ENCODE measurements at regions of chr2 and their contacts with region 1.

Region 1: DNA sequence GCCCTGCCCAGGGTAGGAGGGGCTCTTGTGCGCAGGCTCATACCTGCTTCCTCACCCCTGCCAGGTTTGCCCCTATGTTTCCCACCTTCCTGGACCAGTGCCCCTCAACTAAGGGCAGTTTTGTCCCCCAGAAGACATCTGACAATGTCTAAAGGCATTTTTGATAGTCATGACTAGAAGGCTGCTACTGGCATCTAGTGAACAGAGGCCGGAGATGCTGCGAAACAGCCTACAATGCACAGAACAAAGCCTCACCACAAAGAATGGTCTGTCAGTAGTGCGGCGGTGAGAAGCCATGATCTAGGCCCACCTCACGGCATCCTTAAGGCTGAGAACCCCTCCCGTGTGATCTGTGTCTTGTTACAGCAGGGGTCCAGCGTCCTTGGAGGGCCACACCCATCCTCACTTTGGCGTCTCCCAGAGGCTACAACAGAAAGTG is 96.0 kb downstream of the TMEM17 start:
- DNase-seq: no peak
- ATAC-seq: no peak
- H3K4me3 Mint-ChIP-seq: no peak overlapping the region
- H3K27ac Mint-ChIP-seq: no peak overlapping the region
- H3K4me1 Mint-ChIP-seq: peaks cover 34% of the 10 kb centered on the region
- H3K27me3 Mint-ChIP-seq: peaks cover 2% of the 10 kb centered on the region; the same call in 1 of the 2 replicates
- CTCF ChIP-seq: no peak

Region 2: DNA sequence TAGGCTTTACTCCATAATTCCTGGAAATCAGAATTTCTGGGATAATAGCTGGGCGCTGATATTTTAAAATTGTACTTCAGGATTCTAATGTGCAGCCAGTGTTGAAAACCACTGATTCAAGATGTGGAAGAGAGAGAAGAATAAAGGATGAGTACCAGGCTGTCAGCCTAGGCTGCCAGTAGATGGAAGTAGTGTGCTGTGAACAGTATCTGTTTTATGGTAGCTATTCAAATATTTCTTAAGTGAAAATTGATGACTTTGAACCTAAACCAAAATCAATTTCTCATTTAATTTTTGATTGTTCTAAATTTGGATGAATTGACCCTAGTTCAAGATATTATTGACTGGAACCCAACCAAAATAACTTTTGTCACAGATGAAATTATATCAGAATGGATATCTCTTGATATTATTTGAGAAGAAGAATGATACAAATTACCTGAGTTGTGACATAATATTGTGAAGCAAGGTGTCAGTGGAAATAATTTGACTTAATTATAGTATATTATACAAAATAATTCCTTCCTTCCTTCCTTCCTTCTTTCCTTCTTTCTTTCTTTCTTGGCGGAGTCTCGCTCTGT is 416.5 kb before region 1 on chr2:
- CTCF ChIA-PET with region 1: interaction called, 23 read pairs
- POLR2A ChIA-PET with region 1: no interaction called
- DNase-seq: no peak
- ATAC-seq: peak; percentile 60
- H3K4me3 Mint-ChIP-seq: no peak overlapping the region
- H3K27ac Mint-ChIP-seq: no peak overlapping the region
- H3K4me1 Mint-ChIP-seq: peaks cover 5% of the 10 kb centered on the region; the same call in 1 of the 2 replicates
- H3K27me3 Mint-ChIP-seq: no peaks in the 10 kb centered on the region
- CTCF ChIP-seq: peak; percentile 26; the same call in 1 of the 2 replicates

Region 3: DNA sequence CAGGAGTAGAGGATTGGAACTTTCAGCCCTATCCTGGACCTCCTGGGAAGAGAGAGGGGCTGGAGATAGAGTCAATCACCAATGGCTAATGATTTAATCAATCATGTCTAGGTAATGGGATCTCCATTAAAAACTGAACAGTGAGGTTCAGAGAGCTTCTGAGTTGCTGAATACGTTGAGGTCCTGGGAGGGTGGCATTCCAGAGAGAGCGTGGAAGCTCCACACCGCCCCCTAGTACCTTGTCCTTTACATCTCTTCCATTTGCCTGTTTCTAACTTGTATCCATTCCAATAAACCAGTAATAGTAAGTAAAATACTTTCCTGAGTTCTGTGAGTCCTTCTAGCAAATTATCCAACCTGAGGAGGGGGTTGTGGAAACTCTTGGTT is 112.4 kb before region 1 on chr2:
- CTCF ChIA-PET with region 1: interaction called, 13 read pairs
- POLR2A ChIA-PET with region 1: no interaction called
- DNase-seq: peak; percentile 60
- ATAC-seq: peak; percentile 39
- H3K4me3 Mint-ChIP-seq: no peak overlapping the region
- H3K27ac Mint-ChIP-seq: no peak overlapping the region
- H3K4me1 Mint-ChIP-seq: peaks cover 27% of the 10 kb centered on the region
- H3K27me3 Mint-ChIP-seq: no peaks in the 10 kb centered on the region
- CTCF ChIP-seq: no peak

Region 4: GRCh38 chr2:62485761-62486438 is 75.9 kb after region 1 on chr2:
- CTCF ChIA-PET with region 1: no interaction called
- POLR2A ChIA-PET with region 1: no interaction called
- DNase-seq: no peak
- ATAC-seq: no peak
- H3K4me3 Mint-ChIP-seq: no peak overlapping the region
- H3K27ac Mint-ChIP-seq: 0 out of 2 replicates have a peak overlapping the region, but pooled peaks have one; percentile 35
- H3K4me1 Mint-ChIP-seq: peaks cover 15% of the 10 kb centered on the region
- H3K27me3 Mint-ChIP-seq: no peaks in the 10 kb centered on the region
- CTCF ChIP-seq: no peak

Measured in WTC11 (cell line).